ENCODE measurements at regions of chr12 and their contacts with region 1.

Region 1: DNA sequence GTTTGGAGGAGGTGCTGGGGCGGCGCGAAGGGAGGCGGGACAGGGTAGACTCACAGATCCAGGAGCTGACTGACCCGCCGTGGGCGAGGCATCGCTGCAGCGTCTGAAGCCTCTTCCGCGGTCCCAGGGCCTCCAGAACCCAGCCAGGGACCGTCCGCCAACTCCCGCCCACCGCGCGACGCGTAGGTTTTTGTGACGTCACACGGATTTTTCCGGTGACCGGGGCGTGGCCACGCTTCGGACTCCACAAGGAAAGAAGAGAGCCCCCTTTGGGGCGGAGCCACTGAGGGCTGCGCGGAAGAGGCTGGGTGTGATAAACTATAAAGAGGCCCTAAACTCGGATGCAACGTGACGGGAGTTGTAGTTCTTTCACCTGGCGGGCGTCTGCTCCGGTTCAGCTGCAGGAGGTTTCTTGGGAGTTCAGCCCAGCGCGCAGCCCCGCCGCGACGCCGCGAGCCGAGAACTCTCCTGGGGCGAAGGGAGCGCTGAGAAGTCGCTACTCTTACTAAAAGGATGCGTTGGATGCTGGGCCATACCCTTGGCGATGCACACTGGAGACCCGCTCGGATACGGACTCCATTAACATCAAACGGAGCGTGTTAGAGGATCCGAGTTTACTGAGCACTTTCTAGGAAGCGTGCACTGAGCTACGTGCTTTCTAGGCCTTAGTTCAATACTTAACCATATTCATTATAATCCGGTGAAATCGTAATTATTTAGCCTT is at the start of gene AMN1:
- DNase-seq: peak; percentile 94 to 99
- ATAC-seq: peak; percentile 88 to 91
- H3K4me3 ChIP-seq: peak within 1 kb of the TSS; percentile 72 to 89 (median 79)
- H3K27ac ChIP-seq: peak within 1 kb of the TSS; percentile 91 to 97 (median 94)
- H3K4me1 ChIP-seq: peaks cover 50 to 54% of the 10 kb centered on the region in 2 donors
- H3K27me3 ChIP-seq: no peaks in the 10 kb centered on the region
- CTCF ChIP-seq: peak in 1 of 5 experiments; percentile 32
- POLR2A ChIP-seq: peak; percentile 75 to 92
- total RNA-seq, gene AMN1: 14.9 to 27.2 (median 18.6) TPM

Region 2: DNA sequence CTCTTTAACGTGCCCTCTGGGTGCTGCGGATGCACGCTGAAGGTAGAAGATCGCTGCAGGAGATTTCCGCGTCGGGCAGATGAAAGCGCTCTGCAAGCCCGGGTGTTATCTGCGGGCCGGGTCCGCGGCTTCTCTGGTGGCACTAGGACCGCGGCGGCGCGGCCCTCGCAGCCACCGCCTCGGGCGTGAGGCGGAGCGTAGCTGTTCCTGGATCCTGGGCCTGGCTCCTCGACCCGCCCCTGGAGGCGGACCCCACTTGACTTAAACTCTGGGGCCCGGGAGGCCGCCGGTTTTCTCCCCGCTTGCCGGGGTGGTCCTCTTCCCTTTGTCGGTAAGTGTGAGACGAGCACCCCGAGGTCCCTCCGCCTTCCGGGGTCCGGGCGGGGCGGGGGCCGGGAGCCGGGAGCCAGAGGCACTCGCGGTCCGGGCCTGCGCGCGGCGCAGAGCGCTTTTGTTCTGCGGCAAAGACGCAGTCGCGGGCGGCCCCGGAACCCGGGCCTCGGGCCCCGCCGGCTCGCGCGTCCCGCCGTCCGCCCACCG is 230.2 kb after region 1 on chr12 and contains the start of gene RESF1:
- in situ Hi-C with region 1: loop called in 1 of 4 experiments (anchors 10 kb)
- intact Hi-C with region 1: loop called (anchors 5 kb)
- DNase-seq: peak; percentile 68 to 75
- ATAC-seq: peak; percentile 93 to 96
- H3K4me3 ChIP-seq: peak within 1 kb of the TSS; percentile 62 to 76 (median 68)
- H3K27ac ChIP-seq: peak within 1 kb of the TSS; percentile 81 to 91 (median 84)
- H3K4me1 ChIP-seq: peaks cover 21 to 34% of the 10 kb centered on the region in 2 donors
- H3K27me3 ChIP-seq: no peaks in the 10 kb centered on the region
- CTCF ChIP-seq: peak in 1 of 5 experiments; percentile 19
- POLR2A ChIP-seq: peak; percentile 66 to 69
- total RNA-seq, gene RESF1: 16.0 to 31.7 (median 17.7) TPM

Region 3: DNA sequence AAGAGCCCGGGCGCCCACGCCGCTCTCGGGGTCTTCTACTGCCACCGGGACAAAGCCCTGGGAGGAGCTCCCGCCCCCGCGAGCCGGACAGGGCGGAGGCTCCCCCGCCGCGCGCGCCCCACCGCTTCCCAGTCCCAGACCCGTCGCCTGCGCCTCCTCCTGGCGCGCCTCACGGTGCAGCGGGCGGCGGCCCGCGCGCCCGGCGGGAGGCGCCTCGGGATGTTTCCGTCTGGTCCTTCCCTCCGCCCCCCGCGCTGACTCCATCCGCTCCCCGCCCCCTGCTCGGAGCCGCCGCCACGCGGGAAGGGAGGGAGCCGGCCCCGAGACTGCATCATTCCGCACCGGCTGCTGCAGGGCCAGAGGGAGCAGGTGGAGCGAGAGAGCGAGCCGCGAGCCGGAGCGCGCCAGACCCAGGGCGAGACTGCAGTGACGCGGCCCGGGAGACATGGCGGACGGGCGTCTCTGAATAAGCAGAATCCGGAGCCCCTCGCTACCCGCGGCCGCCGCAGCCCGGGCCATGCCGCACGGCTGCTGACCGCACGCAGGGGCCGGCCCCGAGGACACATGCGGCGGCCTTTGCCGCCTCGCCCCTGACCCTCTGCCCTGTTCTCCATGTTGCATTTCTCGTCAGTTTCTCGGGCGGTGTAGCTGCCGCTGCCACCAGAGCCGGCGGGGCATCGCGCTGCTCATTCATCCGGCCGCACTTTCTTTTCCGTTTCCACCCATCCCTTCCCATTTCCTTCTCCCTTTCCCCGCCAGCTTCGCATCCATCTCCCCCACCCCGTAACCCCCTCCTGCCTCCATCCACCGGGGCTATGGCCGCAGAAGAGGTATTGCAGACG is 377.7 kb after region 1 on chr12 and contains the start of gene BICD1:
- in situ Hi-C with region 1: no loop called
- intact Hi-C with region 1: loop called (anchors 10 kb)
- DNase-seq: peak; percentile 55 to 75
- ATAC-seq: peak; percentile 70 to 80
- H3K4me3 ChIP-seq: peak within 1 kb of the TSS; percentile 65 to 82 (median 72)
- H3K27ac ChIP-seq: peak within 1 kb of the TSS; percentile 76 to 85 (median 78)
- H3K4me1 ChIP-seq: peaks cover 11 to 13% of the 10 kb centered on the region in 2 donors
- H3K27me3 ChIP-seq: peaks cover 0 to 5% (median 0%) of the 10 kb centered on the region in 3 donors
- CTCF ChIP-seq: peak in 3 of 5 experiments; percentile 17 to 40 (median 32)
- POLR2A ChIP-seq: peak; percentile 69 to 75
- total RNA-seq, gene BICD1: 1.4 to 2.3 (median 2.0) TPM

Measured in gastrocnemius medialis (tissue), 4 donors.